AG04450 (cell line): ENCODE measurements at regions of chr7 and their contacts with region 1.

Region 1: GRCh38 chr7:135620980-135621850 is 41.1 kb upstream of the STMP1 start:
- DNase-seq: peak; percentile 75
- H3K4me3 ChIP-seq: no peak overlapping the region
- H3K27ac ChIP-seq: no peak overlapping the region
- H3K27me3 ChIP-seq: no peaks in the 10 kb centered on the region
- CTCF ChIP-seq: peak; percentile 89

Region 2: GRCh38 chr7:135434047-135434446 is 187.2 kb before region 1 on chr7:
- CTCF ChIA-PET with region 1: no interaction called
- POLR2A ChIA-PET with region 1: no interaction called
- DNase-seq: no peak
- H3K4me3 ChIP-seq: no peak overlapping the region
- H3K27ac ChIP-seq: no peak overlapping the region
- H3K27me3 ChIP-seq: no peaks in the 10 kb centered on the region
- CTCF ChIP-seq: no peak

Region 3: GRCh38 chr7:135602304-135602703 is 18.9 kb before region 1 on chr7:
- CTCF ChIA-PET with region 1: interaction called, 39 read pairs
- POLR2A ChIA-PET with region 1: no interaction called
- DNase-seq: no peak
- H3K4me3 ChIP-seq: no peak overlapping the region
- H3K27ac ChIP-seq: no peak overlapping the region
- H3K27me3 ChIP-seq: no peaks in the 10 kb centered on the region
- CTCF ChIP-seq: no peak

Region 4: DNA sequence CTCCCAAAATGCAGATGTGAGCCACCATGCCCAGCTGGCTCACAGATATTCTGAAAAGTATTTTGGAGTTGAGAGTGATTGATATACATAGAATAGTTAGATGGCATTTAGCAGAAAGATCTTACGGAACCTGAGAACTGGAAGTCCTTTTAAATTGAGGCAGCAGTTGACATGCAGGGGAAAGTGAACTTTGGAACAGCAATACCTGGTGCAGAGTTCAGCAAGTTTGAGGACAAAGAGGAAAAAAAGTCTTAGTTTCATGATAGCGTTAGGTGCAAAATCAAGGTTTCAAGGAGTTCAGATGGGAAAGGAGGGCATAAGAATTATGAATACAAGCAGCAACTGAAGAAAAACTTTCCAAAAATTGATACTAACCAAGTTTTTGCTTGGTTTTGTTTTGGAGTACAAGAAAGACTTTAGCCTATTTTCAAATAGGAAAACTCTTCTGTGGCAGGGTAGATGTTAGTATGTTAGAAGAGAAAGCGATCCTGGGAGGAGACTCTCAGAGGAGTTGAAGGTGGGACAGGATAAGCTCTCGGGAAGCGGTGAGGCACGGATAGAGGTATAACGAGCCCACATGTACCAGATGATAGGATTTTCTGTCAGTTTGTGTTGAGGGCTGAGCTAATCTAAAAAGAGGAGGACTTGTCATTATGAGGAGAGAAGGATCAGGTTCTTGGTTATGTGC is 13.1 kb after region 1 on chr7:
- CTCF ChIA-PET with region 1: interaction called, 55 read pairs
- POLR2A ChIA-PET with region 1: no interaction called
- DNase-seq: no peak
- H3K4me3 ChIP-seq: no peak overlapping the region
- H3K27ac ChIP-seq: no peak overlapping the region
- H3K27me3 ChIP-seq: no peaks in the 10 kb centered on the region
- CTCF ChIP-seq: no peak

Region 5: DNA sequence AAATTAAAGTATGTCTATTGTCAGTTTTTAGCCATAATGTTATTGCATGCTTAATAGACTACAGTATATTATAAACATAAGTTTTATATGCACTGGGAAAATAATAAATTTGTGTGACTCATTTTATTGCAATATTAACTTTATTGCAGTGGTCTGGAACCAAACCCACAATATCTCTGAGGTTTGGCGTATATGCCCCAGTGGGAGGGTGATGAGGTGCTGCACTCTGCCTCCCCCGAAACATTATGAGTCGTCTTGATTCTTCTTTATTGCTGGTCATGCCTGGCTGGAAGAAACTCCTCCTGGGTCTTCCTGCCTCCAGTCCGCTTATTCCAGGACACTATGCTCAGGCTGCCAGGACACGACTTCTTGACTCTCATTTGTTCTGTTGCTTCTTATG is 267.5 kb after region 1 on chr7:
- CTCF ChIA-PET with region 1: no interaction called
- POLR2A ChIA-PET with region 1: no interaction called
- DNase-seq: no peak
- H3K4me3 ChIP-seq: no peak overlapping the region
- H3K27ac ChIP-seq: no peak overlapping the region
- H3K27me3 ChIP-seq: no peaks in the 10 kb centered on the region
- CTCF ChIP-seq: no peak